ENCODE measurements at regions of chr12 and their contacts with region 1.

Region 1: GRCh38 chr12:53251477-53252348 is 16.4 kb upstream of the ESPL1 start:
- DNase-seq: peak; percentile 43 to 87 (median 65)
- ATAC-seq: peak; percentile 86
- H3K4me3 ChIP-seq: peak overlapping the region; percentile 89
- H3K4me3 Mint-ChIP-seq: peak overlapping the region; percentile 99
- H3K27ac ChIP-seq: peak overlapping the region; percentile 50 to 74
- H3K27ac Mint-ChIP-seq: peak overlapping the region; percentile 93
- H3K4me1 ChIP-seq: peaks cover 51% of the 10 kb centered on the region
- H3K4me1 Mint-ChIP-seq: peaks cover 52% of the 10 kb centered on the region
- H3K27me3 ChIP-seq: no peaks in the 10 kb centered on the region
- H3K27me3 Mint-ChIP-seq: no peaks in the 10 kb centered on the region
- CTCF ChIP-seq: peak; percentile 57

Region 2: DNA sequence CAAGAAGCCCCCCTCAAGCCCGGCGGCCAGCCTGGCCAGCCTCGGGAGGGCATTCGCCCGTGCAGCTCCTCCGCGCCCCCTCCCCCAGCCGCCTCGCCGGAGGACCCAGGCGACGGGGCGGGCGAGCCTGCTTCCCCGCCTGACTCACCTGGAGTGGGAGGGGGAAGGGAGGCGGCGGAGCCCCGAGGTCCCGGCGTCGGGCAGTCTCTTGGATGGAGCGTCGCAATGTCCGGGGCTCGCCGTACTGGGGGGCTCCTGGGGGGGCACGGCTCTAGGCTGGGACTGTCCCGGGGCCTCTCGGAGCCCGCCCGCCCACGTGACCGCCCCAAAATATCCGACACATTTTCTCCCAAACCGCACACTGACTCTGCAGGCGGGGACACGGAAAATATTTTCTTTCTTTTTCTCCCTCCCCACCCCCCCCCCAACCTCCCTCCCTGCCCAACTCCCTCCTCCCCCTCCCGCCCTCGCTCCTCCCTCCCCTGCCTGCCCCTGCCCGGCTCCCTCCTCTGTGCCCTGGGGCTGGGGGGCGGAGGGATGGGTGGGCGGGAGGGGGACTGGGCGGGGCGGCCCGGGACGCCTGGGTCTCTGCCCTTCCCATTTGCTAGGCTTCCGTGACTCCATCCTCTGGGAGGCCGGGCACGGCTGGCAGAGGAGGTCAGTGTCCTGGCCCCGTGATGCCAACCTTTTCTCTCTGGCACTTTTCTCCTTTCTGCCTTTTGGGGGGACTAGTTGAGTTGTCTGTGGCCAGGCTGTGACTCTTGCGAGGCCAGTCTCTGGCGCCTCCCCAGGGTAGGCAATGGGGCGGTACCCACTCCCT is 19.7 kb before region 1 on chr12 and contains the start of gene RARG:
- CTCF ChIA-PET with region 1: interaction called, 12 read pairs
- POLR2A ChIA-PET with region 1: no interaction called
- intact Hi-C with region 1: no loop called
- DNase-seq: peak in 12 of 14 experiments; percentile 47 to 86 (median 66)
- ATAC-seq: peak; percentile 66
- H3K4me3 ChIP-seq: peak within 1 kb of the TSS; percentile 55
- H3K4me3 Mint-ChIP-seq: peak within 1 kb of the TSS; percentile 91
- H3K27ac ChIP-seq: peak within 1 kb of the TSS; percentile 55 to 86
- H3K27ac Mint-ChIP-seq: peak within 1 kb of the TSS; percentile 81
- H3K4me1 ChIP-seq: peaks cover 93% of the 10 kb centered on the region
- H3K4me1 Mint-ChIP-seq: peaks cover 72% of the 10 kb centered on the region
- H3K27me3 ChIP-seq: no peaks in the 10 kb centered on the region
- H3K27me3 Mint-ChIP-seq: no peaks in the 10 kb centered on the region
- CTCF ChIP-seq: no peak
- total RNA-seq, gene RARG: 14.0 to 15.8 TPM

Region 3: DNA sequence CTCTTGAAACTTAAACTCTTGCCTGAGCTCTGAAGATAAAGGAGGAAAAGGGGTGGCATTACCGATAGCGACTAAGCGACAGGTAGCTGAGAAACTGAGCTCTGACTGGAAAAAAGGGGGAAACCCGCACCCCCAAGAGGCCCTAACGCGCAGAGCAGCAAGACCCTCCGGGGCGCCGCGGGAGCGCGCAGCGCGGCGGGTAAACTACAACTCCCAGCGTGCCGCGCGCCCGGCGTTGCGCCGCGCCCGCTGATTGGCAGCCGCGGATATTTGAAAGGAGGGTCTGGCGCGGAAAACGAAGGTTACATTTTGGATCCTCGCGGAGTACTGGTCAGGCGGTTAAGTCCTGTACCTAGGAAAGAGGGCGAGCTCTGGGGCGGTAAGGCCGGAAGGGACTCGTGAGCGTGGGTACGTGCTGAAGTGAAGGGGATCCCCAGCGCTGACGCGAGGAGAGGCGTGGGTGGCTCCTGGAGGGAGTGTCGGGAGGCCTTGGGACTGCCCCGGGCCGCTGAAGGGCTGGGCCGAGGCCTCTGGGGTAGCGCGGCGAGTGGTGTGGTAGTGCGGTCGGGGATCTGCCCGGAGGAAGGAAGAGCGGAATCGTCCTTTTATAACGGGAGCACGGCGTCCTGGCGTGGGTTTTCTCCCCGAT is 16.4 kb after region 1 on chr12 and contains the start of gene ESPL1:
- CTCF ChIA-PET with region 1: interaction called, 12 read pairs
- POLR2A ChIA-PET with region 1: interaction called, 6 read pairs
- intact Hi-C with region 1: loop called (anchors 1 kb)
- DNase-seq: peak; percentile 55 to 93 (median 74)
- ATAC-seq: peak; percentile 91
- H3K4me3 ChIP-seq: peak within 1 kb of the TSS; percentile 86
- H3K4me3 Mint-ChIP-seq: peak within 1 kb of the TSS; percentile 95
- H3K27ac ChIP-seq: peak within 1 kb of the TSS; percentile 40 to 50
- H3K27ac Mint-ChIP-seq: peak within 1 kb of the TSS; percentile 82
- H3K4me1 ChIP-seq: peaks cover 18% of the 10 kb centered on the region
- H3K4me1 Mint-ChIP-seq: peaks cover 19% of the 10 kb centered on the region
- H3K27me3 ChIP-seq: no peaks in the 10 kb centered on the region
- H3K27me3 Mint-ChIP-seq: no peaks in the 10 kb centered on the region
- CTCF ChIP-seq: peak; percentile 36
- total RNA-seq, gene ESPL1: 0.20 to 0.71 TPM

Region 4: GRCh38 chr12:53287741-53288216 is 36.1 kb after region 1 on chr12:
- CTCF ChIA-PET with region 1: interaction called, 4 read pairs
- POLR2A ChIA-PET with region 1: no interaction called
- intact Hi-C with region 1: loop called in 1 of 2 experiments (anchors 5 kb)
- DNase-seq: peak; percentile 60 to 88 (median 70)
- ATAC-seq: peak; percentile 98
- H3K4me3 ChIP-seq: no peak overlapping the region
- H3K4me3 Mint-ChIP-seq: no peak overlapping the region
- H3K27ac ChIP-seq: no peak overlapping the region
- H3K27ac Mint-ChIP-seq: peak overlapping the region; percentile 0
- H3K4me1 ChIP-seq: peaks cover 6% of the 10 kb centered on the region
- H3K4me1 Mint-ChIP-seq: peaks cover 5% of the 10 kb centered on the region
- H3K27me3 ChIP-seq: no peaks in the 10 kb centered on the region
- H3K27me3 Mint-ChIP-seq: no peaks in the 10 kb centered on the region
- CTCF ChIP-seq: peak; percentile 81

Region 5: DNA sequence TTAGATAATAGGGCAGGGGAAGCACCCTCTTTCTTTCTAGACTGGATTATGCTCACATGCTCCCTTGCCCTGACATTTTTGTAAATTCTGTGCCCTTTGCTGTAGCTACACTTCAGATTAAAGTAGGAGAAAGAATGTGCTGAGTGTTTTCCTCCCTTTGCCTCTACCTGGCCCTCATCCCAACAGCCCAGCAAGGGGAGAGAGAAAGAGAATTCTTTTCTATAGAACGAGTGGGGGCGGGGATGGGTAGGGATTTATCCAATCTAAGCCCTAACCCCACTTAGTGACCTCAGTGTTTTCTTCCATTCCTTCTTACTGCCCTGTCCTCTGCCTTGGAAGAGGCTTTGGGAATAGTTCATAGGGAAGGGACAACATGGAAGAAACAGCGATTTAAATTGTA is 1099.0 kb after region 1 on chr12:
- CTCF ChIA-PET with region 1: no interaction called
- POLR2A ChIA-PET with region 1: no interaction called
- intact Hi-C with region 1: no loop called
- DNase-seq: no peak
- ATAC-seq: no peak
- H3K4me3 ChIP-seq: no peak overlapping the region
- H3K4me3 Mint-ChIP-seq: no peak overlapping the region
- H3K27ac ChIP-seq: no peak overlapping the region
- H3K27ac Mint-ChIP-seq: no peak overlapping the region
- H3K4me1 ChIP-seq: peaks cover 16% of the 10 kb centered on the region
- H3K4me1 Mint-ChIP-seq: peaks cover 18% of the 10 kb centered on the region
- H3K27me3 ChIP-seq: no peaks in the 10 kb centered on the region
- H3K27me3 Mint-ChIP-seq: no peaks in the 10 kb centered on the region
- CTCF ChIP-seq: no peak

Measured in CD4-positive, alpha-beta T cell (primary cell).